ENCODE measurements at regions of chr9 and their contacts with region 1.

Region 1: GRCh38 chr9:133742849-133743444 is 4.8 kb upstream of the SARDH start:
- DNase-seq: peak; percentile 82
- ATAC-seq: peak; percentile 75
- H3K4me3 Mint-ChIP-seq: no peak overlapping the region
- H3K27ac Mint-ChIP-seq: no peak overlapping the region
- H3K4me1 Mint-ChIP-seq: peaks cover 9% of the 10 kb centered on the region
- H3K27me3 Mint-ChIP-seq: no peaks in the 10 kb centered on the region
- CTCF ChIP-seq: peak; percentile 99

Region 2: GRCh38 chr9:133731876-133732638 is 10.9 kb before region 1 on chr9:
- CTCF ChIA-PET with region 1: interaction called, 18 read pairs
- POLR2A ChIA-PET with region 1: no interaction called
- intact Hi-C with region 1: no loop called
- DNase-seq: no peak
- ATAC-seq: no peak
- H3K4me3 Mint-ChIP-seq: no peak overlapping the region
- H3K27ac Mint-ChIP-seq: no peak overlapping the region
- H3K4me1 Mint-ChIP-seq: peaks cover under 1% of the 10 kb centered on the region
- H3K27me3 Mint-ChIP-seq: no peaks in the 10 kb centered on the region
- CTCF ChIP-seq: no peak

Region 3: GRCh38 chr9:133754187-133754586 is 11.2 kb after region 1 on chr9:
- CTCF ChIA-PET with region 1: interaction called, 10 read pairs
- POLR2A ChIA-PET with region 1: no interaction called
- intact Hi-C with region 1: no loop called
- DNase-seq: no peak
- ATAC-seq: no peak
- H3K4me3 Mint-ChIP-seq: no peak overlapping the region
- H3K27ac Mint-ChIP-seq: no peak overlapping the region
- H3K4me1 Mint-ChIP-seq: no peaks in the 10 kb centered on the region
- H3K27me3 Mint-ChIP-seq: peaks cover 25% of the 10 kb centered on the region
- CTCF ChIP-seq: no peak

Region 4: DNA sequence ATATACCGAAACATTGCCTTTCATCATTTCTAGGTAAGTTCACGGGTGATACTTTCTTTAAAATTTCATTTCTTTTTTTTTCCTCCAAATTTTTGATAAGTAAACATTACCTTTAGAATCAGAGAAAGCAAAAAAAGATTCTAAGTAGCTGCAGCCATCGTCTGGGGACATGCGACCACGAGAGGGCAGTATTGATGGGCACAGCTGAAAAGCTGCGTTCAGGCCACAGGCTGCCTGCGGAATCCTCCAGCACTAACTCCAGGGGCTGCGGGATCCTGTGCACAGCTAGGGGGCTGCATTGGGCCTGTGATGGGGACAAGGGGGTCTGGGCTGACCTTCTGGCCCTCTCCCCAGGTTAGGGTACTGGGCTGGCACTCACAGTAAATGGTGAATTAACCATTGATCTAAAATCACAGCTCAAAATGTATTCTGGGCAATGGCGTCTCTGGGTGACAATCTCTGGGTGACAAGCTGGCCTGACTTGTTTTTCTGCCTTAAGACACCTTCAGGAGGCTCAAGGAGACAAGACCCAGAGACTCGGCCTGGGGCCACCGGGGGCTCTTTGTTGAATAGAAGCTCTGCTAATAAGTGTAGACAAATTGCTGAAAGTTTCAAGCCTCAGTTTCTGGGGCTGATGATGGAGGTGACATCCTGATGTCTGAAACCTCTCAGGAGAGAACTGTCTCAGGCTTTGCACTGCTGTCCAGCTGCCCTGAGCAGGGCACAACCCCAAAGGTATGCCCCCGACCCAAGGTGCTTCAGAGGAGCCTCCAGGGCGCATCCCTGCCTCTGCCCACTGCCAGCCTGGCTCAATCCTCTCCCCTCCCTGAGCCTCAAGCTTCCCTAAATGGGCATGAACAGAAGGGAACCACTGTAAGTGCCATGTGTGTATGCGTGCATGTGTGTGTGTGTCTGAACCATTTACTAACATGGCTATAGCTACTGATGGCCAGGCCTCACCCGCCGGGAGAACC is 39.5 kb after region 1 on chr9:
- CTCF ChIA-PET with region 1: interaction called, 11 read pairs
- POLR2A ChIA-PET with region 1: no interaction called
- intact Hi-C with region 1: no loop called
- DNase-seq: peak; percentile 84
- ATAC-seq: peak; percentile 70
- H3K4me3 Mint-ChIP-seq: no peak overlapping the region
- H3K27ac Mint-ChIP-seq: no peak overlapping the region
- H3K4me1 Mint-ChIP-seq: no peaks in the 10 kb centered on the region
- H3K27me3 Mint-ChIP-seq: no peaks in the 10 kb centered on the region
- CTCF ChIP-seq: peak; percentile 73